ENCODE measurements at regions of chr7 and their contacts with region 1.

Region 1: DNA sequence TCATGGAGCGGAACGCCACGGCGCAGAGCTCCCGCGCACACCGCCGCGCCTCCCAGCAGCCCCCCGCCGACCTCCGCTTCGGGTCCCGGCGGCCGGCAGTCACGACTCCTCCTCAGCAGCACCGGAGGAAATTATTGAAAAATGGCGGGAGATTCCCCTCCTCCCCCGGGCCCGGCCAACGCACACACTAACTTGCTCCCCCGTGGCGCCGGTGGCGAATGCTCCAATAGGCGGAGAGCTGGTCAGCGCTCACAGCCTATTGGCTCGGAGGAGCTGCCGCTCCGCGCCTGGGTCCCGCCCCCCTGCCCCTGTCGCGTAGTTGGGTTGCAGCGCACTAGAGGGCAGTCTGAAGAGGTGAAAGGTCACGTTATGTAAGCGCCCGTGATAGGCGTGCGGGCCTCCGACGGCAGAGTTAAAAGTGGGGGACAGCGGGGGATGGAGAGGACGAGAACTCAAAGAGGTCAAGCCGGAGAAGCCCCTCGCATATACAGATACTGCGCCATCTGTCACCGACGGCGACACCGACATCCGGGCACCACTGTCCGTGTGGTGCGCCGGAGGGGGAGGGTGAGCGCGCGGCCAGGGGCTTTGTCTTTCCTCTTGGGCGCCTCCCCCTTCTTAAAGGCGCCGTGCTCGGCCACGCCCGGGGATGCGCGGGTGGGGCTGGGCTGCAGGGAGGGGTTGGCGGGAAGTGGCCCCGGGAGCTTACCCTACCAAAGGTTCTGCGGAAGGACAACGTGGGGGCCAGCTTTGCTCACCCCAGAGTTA is at the start of gene BAZ1B:
- DNase-seq: peak; percentile 86 to 96 (median 91)
- ATAC-seq: peak; percentile 98
- H3K4me3 ChIP-seq: peak within 1 kb of the TSS; percentile 75
- H3K4me3 Mint-ChIP-seq: peak within 1 kb of the TSS; percentile 91 to 99 (median 96)
- H3K27ac ChIP-seq: peak within 1 kb of the TSS; percentile 85
- H3K27ac Mint-ChIP-seq: peak within 1 kb of the TSS; percentile 95 to 100 (median 98)
- H3K4me1 ChIP-seq: peaks cover 34 to 53% of the 10 kb centered on the region in 2 donors
- H3K4me1 Mint-ChIP-seq: peaks cover 56 to 78% (median 70%) of the 10 kb centered on the region in 7 donors
- H3K27me3 ChIP-seq: no peaks in the 10 kb centered on the region
- H3K27me3 Mint-ChIP-seq: no peaks in the 10 kb centered on the region
- total RNA-seq, gene BAZ1B: 44.7 to 90.3 (median 66.7) TPM

Region 2: DNA sequence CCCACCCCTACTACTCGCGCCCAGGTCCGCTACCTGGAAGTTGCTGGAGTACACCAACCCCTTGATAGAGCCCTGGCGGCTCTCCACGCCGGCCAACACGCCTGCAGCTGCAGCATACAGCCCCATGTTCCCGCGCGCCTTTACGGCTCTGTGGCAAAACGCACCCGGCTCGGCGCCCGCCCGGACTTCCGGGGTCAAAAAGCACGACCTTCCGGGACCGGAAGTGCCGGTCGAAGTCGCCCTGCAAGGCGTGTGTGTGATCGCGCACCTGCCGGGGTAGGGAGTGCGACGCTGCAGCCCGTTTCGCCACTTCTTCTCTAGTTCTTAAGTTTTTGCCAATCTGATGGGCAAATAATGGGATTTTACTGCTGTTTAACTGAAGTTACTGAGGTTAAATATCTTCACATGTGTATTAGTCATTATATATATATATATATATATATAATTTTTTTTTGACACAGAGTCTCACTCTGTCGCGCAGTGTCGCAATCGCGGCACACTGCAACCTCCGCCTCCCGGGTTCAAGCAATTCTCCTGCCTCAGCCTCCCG is 213.5 kb before region 1 on chr7 and contains the start of gene NSUN5:
- CTCF ChIA-PET with region 1: no interaction called
- POLR2A ChIA-PET with region 1: no interaction called
- intact Hi-C with region 1: loop called in 1 of 2 experiments (anchors 1 kb)
- DNase-seq: peak; percentile 82 to 91 (median 88)
- ATAC-seq: peak; percentile 98
- H3K4me3 ChIP-seq: peak within 1 kb of the TSS; percentile 79
- H3K4me3 Mint-ChIP-seq: peak within 1 kb of the TSS; percentile 88 to 99 (median 96)
- H3K27ac ChIP-seq: peak within 1 kb of the TSS; percentile 72
- H3K27ac Mint-ChIP-seq: peak within 1 kb of the TSS; percentile 86 to 97 (median 92)
- H3K4me1 ChIP-seq: peaks cover 7 to 15% of the 10 kb centered on the region in 2 donors
- H3K4me1 Mint-ChIP-seq: peaks cover 24 to 42% (median 30%) of the 10 kb centered on the region in 7 donors
- H3K27me3 ChIP-seq: no peaks in the 10 kb centered on the region
- H3K27me3 Mint-ChIP-seq: no peaks in the 10 kb centered on the region
- total RNA-seq, gene NSUN5: 34.3 to 81.6 (median 46.0) TPM

Region 3: DNA sequence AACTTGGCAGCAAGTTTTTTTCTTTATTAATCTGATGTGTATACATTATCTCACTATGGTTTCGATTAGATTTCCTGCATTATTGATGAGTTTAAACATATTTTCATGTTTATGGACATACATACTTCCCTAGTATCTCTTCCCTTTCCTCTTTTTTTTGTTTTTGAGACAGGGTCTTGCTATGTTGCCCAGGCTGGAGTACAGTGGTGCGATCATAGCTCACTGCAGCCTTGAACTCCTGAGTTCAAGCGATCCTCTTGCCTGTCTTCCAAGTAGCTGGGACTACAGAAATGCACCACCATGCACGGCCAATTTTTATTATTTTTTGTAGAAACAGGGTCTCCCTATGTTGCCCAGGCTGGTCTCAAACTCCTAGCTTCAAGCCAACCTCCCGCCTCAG is 19.1 kb before region 1 on chr7:
- CTCF ChIA-PET with region 1: interaction called, 4 read pairs
- POLR2A ChIA-PET with region 1: interaction called, 10 read pairs
- intact Hi-C with region 1: no loop called
- DNase-seq: no peak
- ATAC-seq: no peak
- H3K4me3 ChIP-seq: no peak overlapping the region
- H3K4me3 Mint-ChIP-seq: no peak overlapping the region
- H3K27ac ChIP-seq: no peak overlapping the region
- H3K27ac Mint-ChIP-seq: peak overlapping the region in 4 of 9 donors; percentile 11 to 45 (median 26)
- H3K4me1 ChIP-seq: no peaks in the 10 kb centered on the region
- H3K4me1 Mint-ChIP-seq: peaks cover 6 to 30% (median 16%) of the 10 kb centered on the region in 7 donors
- H3K27me3 ChIP-seq: no peaks in the 10 kb centered on the region
- H3K27me3 Mint-ChIP-seq: no peaks in the 10 kb centered on the region

Region 4: DNA sequence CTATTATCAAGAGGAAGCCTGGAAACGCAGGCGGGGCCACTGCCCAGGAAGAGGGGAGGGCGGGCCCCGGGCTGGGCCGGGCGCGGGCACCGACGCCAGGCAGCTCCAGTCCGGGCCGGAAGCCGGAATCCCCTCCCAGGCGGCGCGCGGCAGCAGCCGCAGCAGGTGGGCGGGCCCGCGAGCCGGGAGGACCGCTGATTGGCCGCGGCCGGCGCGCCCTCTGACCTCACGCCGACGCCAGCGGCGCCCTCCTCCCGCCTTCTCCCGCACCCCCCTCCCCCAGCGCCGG is 34.8 kb after region 1 on chr7:
- CTCF ChIA-PET with region 1: no interaction called
- POLR2A ChIA-PET with region 1: interaction called, 46 read pairs
- intact Hi-C with region 1: loop called (anchors 1 kb)
- DNase-seq: peak; percentile 86 to 95 (median 91)
- ATAC-seq: peak; percentile 93
- H3K4me3 ChIP-seq: peak overlapping the region; percentile 81
- H3K4me3 Mint-ChIP-seq: peak overlapping the region; percentile 88 to 97 (median 93)
- H3K27ac ChIP-seq: peak overlapping the region; percentile 100
- H3K27ac Mint-ChIP-seq: peak overlapping the region; percentile 92 to 98 (median 95)
- H3K4me1 ChIP-seq: peaks cover 17 to 23% of the 10 kb centered on the region in 2 donors
- H3K4me1 Mint-ChIP-seq: peaks cover 24 to 41% (median 33%) of the 10 kb centered on the region in 7 donors
- H3K27me3 ChIP-seq: no peaks in the 10 kb centered on the region
- H3K27me3 Mint-ChIP-seq: no peaks in the 10 kb centered on the region

Region 5: DNA sequence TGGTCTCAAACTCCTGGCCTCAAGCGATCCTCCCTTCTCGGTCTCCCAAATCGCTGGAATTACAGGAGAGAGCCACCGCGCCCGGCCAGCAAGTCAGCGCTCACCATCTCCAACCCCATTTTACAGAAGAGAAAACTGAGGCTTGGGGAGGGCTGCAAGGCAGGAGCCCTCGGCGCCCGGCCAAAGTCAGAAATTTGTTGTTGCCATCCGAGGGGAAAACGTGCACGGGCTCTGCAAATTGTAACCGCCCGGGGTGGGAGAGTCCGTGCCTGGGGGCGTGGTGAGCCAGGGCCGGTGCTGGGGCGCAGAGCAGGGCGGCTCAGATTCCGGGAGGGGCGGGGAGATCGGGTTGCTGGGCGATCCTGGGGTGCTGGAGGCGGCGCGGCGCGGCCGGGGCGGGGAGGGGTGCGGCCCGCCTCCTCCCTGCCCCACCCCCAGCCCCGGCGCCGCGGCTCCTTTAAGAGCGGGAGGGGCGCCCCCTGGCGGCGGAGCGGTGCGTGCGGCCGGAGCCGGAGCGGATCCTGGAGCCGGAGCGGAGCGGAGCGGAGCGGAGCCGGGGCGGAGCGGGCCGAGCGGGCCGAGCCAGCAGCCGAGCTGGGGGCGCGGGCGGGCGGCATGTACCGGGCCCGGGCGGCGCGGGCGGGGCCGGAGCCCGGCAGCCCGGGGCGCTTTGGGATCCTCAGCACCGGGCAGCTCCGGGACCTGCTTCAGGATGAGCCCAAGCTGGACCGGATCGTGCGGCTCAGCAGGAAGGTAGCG is 145.2 kb after region 1 on chr7 and contains the start of gene VPS37D:
- CTCF ChIA-PET with region 1: no interaction called
- POLR2A ChIA-PET with region 1: no interaction called
- intact Hi-C with region 1: loop called in 1 of 2 experiments (anchors 1 kb)
- DNase-seq: peak; percentile 84 to 99 (median 93)
- ATAC-seq: peak; percentile 98
- H3K4me3 ChIP-seq: peak within 1 kb of the TSS; percentile 44
- H3K4me3 Mint-ChIP-seq: peak within 1 kb of the TSS; percentile 61 to 84 (median 76)
- H3K27ac ChIP-seq: no peak within 1 kb of the TSS
- H3K27ac Mint-ChIP-seq: peak within 1 kb of the TSS in 5 of 9 donors; percentile 22 to 67 (median 49)
- H3K4me1 ChIP-seq: peaks cover 5 to 6% of the 10 kb centered on the region in 2 donors
- H3K4me1 Mint-ChIP-seq: peaks cover 0 to 15% (median 8%) of the 10 kb centered on the region in 7 donors
- H3K27me3 ChIP-seq: no peaks in the 10 kb centered on the region
- H3K27me3 Mint-ChIP-seq: peaks cover 27 to 58% (median 33%) of the 10 kb centered on the region in 5 donors
- total RNA-seq, gene VPS37D: 0.22 to 0.85 (median 0.44) TPM in 3 of 5 experiments, not detected in the others

Region 6: DNA sequence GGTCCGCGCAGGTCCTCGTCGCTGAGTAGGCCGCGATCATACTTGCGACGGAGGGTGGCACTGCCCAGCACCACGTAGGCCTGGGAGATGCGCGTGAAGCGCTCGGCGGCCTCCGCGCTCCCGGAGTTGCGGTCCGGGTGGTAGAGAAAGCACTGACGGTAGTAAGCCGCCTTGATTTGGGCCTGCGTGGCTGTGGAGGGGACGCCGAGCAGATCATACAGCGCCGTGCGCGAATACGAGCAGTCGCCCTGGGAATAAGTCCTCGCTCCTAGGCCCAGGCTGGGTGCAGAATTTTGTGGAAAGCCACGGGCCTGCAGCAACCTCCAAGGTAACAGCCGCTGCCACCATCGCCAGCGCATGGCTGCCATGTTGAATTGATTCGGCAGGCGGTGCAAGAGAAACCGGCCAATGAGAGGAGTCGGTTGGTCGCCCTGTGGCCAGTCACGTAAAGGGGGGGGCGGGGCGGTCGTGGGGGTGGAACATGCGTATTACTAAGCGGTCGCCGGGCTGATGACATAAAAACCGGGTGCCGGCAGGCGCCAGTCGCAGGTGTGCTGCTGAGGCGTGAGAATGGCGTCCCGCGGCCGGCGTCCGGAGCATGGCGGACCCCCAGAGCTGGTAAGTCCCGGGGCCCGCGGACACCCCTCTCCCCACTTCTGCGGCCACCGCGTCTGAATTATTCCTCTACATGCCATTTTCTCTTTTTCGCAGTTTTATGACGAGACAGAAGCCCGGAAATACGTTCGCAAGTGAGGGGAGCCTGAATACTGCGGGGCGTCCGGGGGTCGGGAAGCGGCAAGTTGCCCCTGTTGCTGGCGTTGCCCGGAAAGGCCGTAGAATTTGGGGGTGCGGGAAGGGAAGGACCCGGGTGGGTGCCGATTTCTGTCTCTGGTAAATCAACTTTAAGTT is 161.0 kb after region 1 on chr7 and contains the starts of genes BUD23 and DNAJC30:
- CTCF ChIA-PET with region 1: no interaction called
- POLR2A ChIA-PET with region 1: no interaction called
- intact Hi-C with region 1: loop called (anchors 1 kb)
- DNase-seq: peak; percentile 77 to 97 (median 88)
- ATAC-seq: peak; percentile 98
- H3K4me3 ChIP-seq: peak within 1 kb of the TSS; percentile 97
- H3K4me3 Mint-ChIP-seq: peak within 1 kb of the TSS; percentile 91 to 98 (median 96)
- H3K27ac ChIP-seq: peak within 1 kb of the TSS; percentile 91
- H3K27ac Mint-ChIP-seq: peak within 1 kb of the TSS; percentile 91 to 97 (median 95)
- H3K4me1 ChIP-seq: peaks cover 17% of the 10 kb centered on the region in 2 donors
- H3K4me1 Mint-ChIP-seq: peaks cover 17 to 62% (median 42%) of the 10 kb centered on the region in 7 donors
- H3K27me3 ChIP-seq: no peaks in the 10 kb centered on the region
- H3K27me3 Mint-ChIP-seq: no peaks in the 10 kb centered on the region
- total RNA-seq, gene BUD23: 50.5 to 107 (median 72.0) TPM
- total RNA-seq, gene DNAJC30: 9.5 to 22.4 (median 13.4) TPM

Region 7: DNA sequence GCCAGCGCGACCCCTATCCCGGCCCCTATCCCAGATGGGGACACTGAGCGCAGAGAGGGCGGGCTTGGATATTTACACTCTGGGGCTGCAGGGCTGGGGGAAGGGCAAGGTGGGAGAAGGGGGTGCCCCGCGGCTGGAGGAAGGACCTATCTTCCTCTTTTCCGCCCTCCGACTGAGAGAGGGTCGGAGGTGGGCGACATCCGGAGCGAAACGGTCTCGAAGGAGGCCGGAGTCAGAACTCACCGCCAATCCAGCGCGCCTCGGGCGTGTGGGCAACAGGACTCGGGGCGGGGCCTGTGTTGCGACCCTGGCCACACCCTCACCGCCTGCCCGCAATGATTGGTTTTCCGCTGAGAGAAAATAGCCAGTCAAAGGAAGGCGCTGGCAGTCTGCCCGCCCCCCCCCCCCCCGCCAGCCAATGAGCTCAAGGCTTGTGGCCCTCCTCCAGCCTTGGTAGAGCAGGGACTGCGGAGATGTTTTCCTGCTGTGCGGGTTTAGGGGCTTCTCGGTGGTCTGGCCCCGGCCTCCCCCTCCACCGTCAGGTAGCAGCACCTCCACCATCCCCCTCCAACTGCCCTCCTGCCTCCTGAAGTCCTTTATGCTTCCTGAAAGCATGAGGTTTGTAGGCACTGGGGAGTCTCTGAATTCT is 320.1 kb after region 1 on chr7 and contains the start of gene METTL27:
- CTCF ChIA-PET with region 1: no interaction called
- POLR2A ChIA-PET with region 1: no interaction called
- intact Hi-C with region 1: loop called in 1 of 2 experiments (anchors 5 kb)
- DNase-seq: peak; percentile 70 to 89 (median 87)
- ATAC-seq: peak; percentile 99
- H3K4me3 ChIP-seq: peak within 1 kb of the TSS; percentile 68
- H3K4me3 Mint-ChIP-seq: peak within 1 kb of the TSS; percentile 82 to 91 (median 89)
- H3K27ac ChIP-seq: peak within 1 kb of the TSS; percentile 73
- H3K27ac Mint-ChIP-seq: peak within 1 kb of the TSS; percentile 53 to 84 (median 77)
- H3K4me1 ChIP-seq: peaks cover 5 to 11% of the 10 kb centered on the region in 2 donors
- H3K4me1 Mint-ChIP-seq: peaks cover 0 to 19% (median 13%) of the 10 kb centered on the region in 7 donors
- H3K27me3 ChIP-seq: no peaks in the 10 kb centered on the region
- H3K27me3 Mint-ChIP-seq: peaks cover 0 to 12% (median 0%) of the 10 kb centered on the region in 5 donors
- total RNA-seq, gene METTL27: 1.8 to 7.4 (median 3.3) TPM

Measured in naive thymus-derived CD4-positive, alpha-beta T cell (primary cell).